Posterior vena cava (tissue), 2 donors: ENCODE measurements at regions of chr9 and their contacts with region 1.

Region 1: DNA sequence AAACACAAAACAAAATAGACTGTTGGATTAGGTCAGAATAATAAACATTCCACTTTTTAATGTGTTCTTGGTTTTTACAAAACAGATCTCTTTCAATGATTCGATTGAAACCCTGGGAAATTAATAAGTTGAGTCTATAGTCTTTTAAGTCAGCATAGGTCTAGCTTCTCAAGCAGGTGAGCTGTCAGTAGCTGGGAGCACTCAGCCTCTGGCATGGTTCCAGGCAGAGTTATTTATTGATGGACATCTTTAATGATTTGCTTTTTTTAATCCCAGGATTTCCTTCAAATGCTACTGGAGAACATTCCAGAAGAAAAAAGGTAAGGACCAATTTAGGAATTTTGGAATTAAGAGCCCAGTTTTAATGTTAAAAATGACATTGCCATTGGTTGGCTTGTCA is 241.0 kb downstream of the AOPEP start:
- DNase-seq: no peak

Region 2: GRCh38 chr9:95053611-95054570 is 86.4 kb after region 1 on chr9:
- intact Hi-C with region 1: loop called in 1 of 2 experiments (anchors 5 kb)
- DNase-seq: no peak

Region 3: DNA sequence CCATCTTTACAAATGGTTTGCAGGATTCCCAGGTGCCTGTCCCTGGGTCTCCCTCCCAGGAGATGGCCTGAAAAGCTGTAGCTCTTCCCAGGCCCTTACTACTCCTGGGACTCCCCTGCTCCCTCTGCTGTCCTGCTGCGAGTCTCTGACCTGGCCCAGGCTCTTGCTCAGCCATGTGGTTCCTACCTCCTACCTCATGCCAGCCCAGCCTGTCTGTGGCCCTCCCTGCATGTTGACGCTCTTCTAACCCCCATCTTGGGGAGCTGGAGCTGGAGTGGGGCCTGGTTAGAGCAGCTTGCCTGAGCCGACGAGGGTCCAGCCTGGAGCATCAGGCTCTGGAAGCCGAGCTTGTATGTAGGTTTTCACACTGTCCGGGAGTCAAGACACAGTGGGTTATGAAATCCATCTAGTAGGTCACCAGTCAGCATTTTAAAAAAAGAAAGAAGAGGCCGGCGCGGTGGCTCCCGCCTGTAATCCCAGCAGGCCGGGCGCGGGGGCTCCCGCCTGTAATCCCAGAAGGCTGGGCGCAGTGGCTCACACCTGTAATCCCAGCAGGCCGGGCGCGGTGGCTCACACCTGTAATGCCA is 105.6 kb after region 1 on chr9:
- intact Hi-C with region 1: no loop called
- DNase-seq: no peak